ENCODE measurements at regions of chr17 and their contacts with region 1.

Region 1: GRCh38 chr17:44919885-44920564 is 4.7 kb upstream of the GFAP start:
- DNase-seq: peak; percentile 84

Region 2: DNA sequence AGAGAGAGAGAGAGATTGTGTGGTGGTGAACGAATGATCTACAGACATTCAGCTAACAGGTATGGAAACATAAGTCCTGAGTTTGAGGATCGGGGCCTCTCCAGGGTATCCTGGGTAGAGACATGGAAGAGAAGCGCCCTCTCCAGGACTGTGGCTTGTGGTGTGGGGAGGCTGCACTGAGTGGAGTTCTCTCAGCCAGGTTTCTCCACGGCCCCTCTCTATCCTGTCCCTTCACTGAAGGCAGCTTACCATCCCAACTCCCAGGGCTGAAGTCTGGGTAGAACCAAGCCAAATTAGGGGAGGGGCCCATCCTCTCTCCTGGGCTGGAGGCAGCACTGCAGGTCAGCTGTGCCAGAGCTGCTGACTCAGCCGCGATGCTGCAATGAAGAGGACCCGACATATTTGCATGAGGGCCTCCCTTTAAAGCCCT is 41.9 kb after region 1 on chr17:
- CTCF ChIA-PET with region 1: interaction called, 10 read pairs
- POLR2A ChIA-PET with region 1: no interaction called
- DNase-seq: peak; percentile 49

Region 3: GRCh38 chr17:45021607-45022287 is 101.7 kb after region 1 on chr17:
- CTCF ChIA-PET with region 1: interaction called, 40 read pairs
- POLR2A ChIA-PET with region 1: interaction called, 9 read pairs
- DNase-seq: peak; percentile 89

Region 4: GRCh38 chr17:45098869-45099616 is 179.0 kb after region 1 on chr17:
- CTCF ChIA-PET with region 1: interaction called, 15 read pairs
- POLR2A ChIA-PET with region 1: no interaction called
- DNase-seq: peak; percentile 91